ENCODE measurements at regions of chr12 and their contacts with region 1.

Region 1: DNA sequence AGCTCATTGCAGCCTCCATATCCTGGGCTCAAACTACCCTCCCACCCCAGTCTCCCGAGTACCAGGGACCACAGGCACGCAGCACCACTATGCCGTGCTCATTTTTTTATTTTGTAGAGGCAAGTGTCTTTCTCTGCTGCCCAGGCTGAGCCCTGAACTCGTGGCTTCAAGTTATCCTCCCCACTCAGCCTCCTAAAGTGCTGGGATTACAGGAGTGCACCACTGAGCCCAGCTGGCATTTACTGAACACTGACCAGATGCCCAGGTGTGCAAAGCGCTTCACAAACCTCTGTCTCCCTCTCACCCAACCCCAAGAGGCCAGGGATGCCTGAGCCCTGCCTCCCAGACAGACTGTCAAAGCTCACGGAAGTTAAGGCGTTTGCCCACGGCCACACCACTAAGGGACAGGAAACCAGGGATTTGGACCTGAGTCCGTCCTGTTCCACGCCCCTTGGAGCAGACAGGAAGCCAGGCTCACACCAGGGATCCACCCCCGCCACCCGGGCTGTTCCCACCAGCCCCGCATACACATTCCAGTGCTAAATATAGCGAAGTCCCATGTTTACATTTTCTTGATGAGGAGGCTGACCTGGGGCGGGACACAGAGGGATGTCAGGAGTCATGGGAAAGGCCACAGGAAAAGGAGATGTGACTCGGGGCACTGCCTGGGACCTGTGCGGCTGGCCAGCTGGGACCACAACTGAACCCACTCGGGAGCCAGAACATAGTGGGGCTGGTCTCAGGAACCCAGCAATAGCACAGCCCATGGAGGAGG is 51.2 kb downstream of the TESC start:
- DNase-seq: peak; percentile 47 to 81 (median 74)
- ATAC-seq: peak; percentile 52
- H3K4me3 ChIP-seq: no peak overlapping the region
- H3K27ac ChIP-seq: peak overlapping the region in 3 of 4 donors; percentile 34 to 53 (median 34)
- H3K4me1 ChIP-seq: peaks cover 48% of the 10 kb centered on the region
- H3K27me3 ChIP-seq: no peaks in the 10 kb centered on the region
- CTCF ChIP-seq: no peak
- POLR2A ChIP-seq: no peak

Region 2: DNA sequence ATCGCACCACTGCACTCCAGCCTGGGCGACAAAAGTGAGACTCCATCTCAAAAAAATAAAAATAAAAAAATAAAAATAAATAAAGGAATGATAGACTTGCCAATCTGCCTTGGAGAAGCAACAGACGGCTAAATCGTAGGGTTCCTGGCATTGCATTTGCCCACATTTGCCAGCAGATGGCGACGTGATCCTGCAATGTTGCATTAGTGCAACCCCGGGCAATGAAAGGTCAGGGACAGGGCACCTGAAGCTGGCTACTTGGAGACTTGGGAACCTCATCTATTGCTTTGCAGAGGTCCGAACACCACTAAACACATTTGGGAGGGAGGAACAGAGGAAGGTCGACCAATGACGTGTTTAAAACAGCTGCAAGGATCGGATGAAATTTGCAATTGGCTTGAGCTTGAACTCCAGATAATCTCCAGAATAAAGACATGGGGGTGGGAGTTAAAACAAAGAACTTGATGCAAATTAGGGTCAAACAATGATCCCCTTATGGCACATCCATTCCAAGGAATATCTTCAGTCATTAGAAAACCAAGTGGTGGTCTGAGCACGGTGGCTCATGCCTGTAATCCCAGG is 344.7 kb before region 1 on chr12:
- intact Hi-C with region 1: no loop called
- DNase-seq: peak; percentile 68 to 77 (median 72)
- ATAC-seq: peak; percentile 81
- H3K4me3 ChIP-seq: no peak overlapping the region
- H3K27ac ChIP-seq: no peak overlapping the region
- H3K4me1 ChIP-seq: peaks cover 17% of the 10 kb centered on the region
- H3K27me3 ChIP-seq: no peaks in the 10 kb centered on the region
- CTCF ChIP-seq: peak; percentile 60 to 96 (median 91)
- POLR2A ChIP-seq: no peak

Region 3: GRCh38 chr12:117100251-117100650 is 52.3 kb after region 1 on chr12:
- intact Hi-C with region 1: loop called (anchors 10 kb)
- DNase-seq: peak in 1 of 4 donors; percentile 49
- ATAC-seq: peak; percentile 20
- H3K4me3 ChIP-seq: no peak overlapping the region
- H3K27ac ChIP-seq: peak overlapping the region in 3 of 4 donors; percentile 7 to 86 (median 29)
- H3K4me1 ChIP-seq: peaks cover 54% of the 10 kb centered on the region
- H3K27me3 ChIP-seq: no peaks in the 10 kb centered on the region
- CTCF ChIP-seq: peak in 5 of 7 experiments; percentile 24 to 43 (median 42)
- POLR2A ChIP-seq: no peak

Region 4: DNA sequence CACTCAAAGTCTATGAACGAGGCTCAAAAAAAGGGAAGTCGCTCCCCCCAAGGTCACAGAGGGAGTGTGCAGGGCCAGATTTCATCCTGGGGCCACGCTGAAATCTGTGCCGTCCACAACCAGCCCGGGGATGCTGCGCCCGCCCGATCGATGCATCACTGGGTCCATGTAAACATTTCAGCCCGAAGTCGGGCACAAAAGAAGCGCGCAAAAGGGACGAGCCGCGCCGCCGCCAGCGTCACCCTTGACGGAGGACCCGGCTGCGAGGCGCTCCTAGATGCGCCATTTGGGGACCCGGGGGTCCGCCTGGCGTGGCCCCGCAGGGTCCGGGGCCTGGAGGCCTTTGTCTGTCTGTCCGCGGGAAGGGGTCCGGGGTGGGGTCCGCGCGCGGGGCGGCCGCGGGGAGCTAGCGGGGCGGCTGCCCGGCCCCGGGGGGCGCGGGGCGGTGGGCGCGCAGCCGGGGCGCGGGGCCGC is 141.8 kb after region 1 on chr12:
- intact Hi-C with region 1: no loop called
- DNase-seq: peak; percentile 28 to 41 (median 34)
- ATAC-seq: peak; percentile 30
- H3K4me3 ChIP-seq: peak overlapping the region; percentile 54 to 59
- H3K27ac ChIP-seq: peak overlapping the region; percentile 30 to 86 (median 72)
- H3K4me1 ChIP-seq: peaks cover 17% of the 10 kb centered on the region
- H3K27me3 ChIP-seq: no peaks in the 10 kb centered on the region
- CTCF ChIP-seq: no peak
- POLR2A ChIP-seq: no peak